ENCODE measurements at regions of chr3 and their contacts with region 1.

Region 1: GRCh38 chr3:49081429-49081828 is 12.4 kb downstream of the QRICH1 start:
- DNase-seq: no peak
- ATAC-seq: no peak
- H3K4me3 ChIP-seq: no peak overlapping the region
- H3K27ac ChIP-seq: no peak overlapping the region
- H3K4me1 ChIP-seq: no peaks in the 10 kb centered on the region
- CTCF ChIP-seq: no peak
- EP300 ChIP-seq: no peak
- POLR2A ChIP-seq: no peak
- RAD21 ChIP-seq: no peak

Region 2: DNA sequence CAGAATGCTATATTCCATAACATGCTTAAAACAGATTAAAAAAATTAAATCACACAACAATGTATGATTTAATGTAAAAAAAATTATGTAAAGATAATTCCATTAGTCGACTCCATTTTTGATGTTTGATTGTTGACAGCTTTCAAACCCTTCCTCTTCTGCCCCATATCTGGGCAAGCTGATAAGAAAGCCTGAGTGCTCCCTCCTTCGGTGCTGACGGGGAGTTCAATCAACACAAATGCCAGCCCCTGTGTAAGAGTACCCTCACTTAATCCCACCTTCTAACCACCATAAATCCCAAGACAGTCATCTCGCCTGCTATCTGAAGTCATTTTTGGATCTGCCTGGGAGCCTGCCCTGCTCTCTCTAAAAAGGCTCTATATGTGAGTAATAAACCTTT is 304.6 kb before region 1 on chr3:
- CTCF ChIA-PET with region 1: no interaction called
- POLR2A ChIA-PET with region 1: no interaction called
- DNase-seq: no peak
- ATAC-seq: no peak
- H3K4me3 ChIP-seq: no peak overlapping the region
- H3K27ac ChIP-seq: no peak overlapping the region
- H3K4me1 ChIP-seq: no peaks in the 10 kb centered on the region
- CTCF ChIP-seq: no peak
- EP300 ChIP-seq: no peak
- POLR2A ChIP-seq: no peak
- RAD21 ChIP-seq: no peak

Region 3: GRCh38 chr3:49021813-49022687 is 59.4 kb before region 1 on chr3 and contains the start of gene NDUFAF3:
- CTCF ChIA-PET with region 1: interaction called, 11 read pairs
- POLR2A ChIA-PET with region 1: no interaction called
- DNase-seq: peak; percentile 63 to 96
- ATAC-seq: peak; percentile 69 to 83
- H3K4me3 ChIP-seq: peak within 1 kb of the TSS; percentile 76
- H3K27ac ChIP-seq: peak within 1 kb of the TSS; percentile 98 to 100
- H3K4me1 ChIP-seq: peaks cover 26% of the 10 kb centered on the region
- CTCF ChIP-seq: peak; percentile 71
- EP300 ChIP-seq: no peak
- POLR2A ChIP-seq: peak; percentile 93
- RAD21 ChIP-seq: no peak
- polyA plus RNA-seq, gene NDUFAF3: 44.3 and 46.5 TPM in 2 replicates

Region 4: DNA sequence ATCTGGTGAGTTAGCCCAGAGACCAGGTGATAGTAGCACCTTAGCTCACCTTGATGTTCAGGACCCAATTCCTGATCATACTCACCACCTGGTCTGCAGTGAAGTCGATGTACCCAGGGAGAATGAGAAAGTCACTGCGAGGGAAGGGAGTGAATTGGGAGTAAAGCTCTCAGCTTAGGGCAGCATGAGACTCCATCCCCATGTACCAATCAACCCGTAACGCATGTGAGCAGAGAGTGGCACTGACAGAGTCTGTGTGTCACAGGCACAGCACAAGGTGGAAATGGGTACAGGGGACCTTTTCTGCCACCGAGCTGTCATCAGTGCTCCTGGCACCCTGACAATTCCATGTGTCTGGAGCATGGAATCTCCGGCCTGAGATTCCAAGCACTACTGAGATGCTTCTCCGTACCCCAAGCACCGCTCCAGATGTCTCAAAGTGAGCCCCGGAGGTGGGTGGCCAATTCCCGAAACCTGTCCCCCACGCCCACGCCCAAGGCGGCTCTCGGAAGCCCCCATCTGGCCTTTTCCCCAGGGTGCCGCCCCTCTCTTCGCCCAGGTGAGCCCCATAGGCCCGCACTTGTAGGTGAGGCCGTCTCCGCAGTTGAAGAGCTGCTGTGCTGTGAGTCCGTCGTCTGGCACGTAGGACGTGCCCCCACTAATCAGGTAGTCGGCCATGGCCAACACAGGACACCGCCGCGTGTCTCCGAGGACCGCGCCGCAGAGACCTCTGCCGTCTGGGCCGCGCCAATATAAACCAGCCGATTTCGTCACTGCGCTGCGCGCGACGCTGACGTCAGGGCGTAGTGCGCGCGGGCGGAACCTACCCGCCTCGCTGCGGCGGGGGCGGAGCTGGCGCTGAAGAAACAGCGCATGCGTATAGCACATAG is 52.5 kb before region 1 on chr3 and contains the start of gene IMPDH2:
- CTCF ChIA-PET with region 1: no interaction called
- POLR2A ChIA-PET with region 1: interaction called, 12 read pairs
- DNase-seq: peak; percentile 47 to 91
- ATAC-seq: peak; percentile 83 to 88
- H3K4me3 ChIP-seq: peak within 1 kb of the TSS; percentile 81
- H3K27ac ChIP-seq: peak within 1 kb of the TSS; percentile 90 to 91
- H3K4me1 ChIP-seq: peaks cover 14% of the 10 kb centered on the region
- CTCF ChIP-seq: no peak
- EP300 ChIP-seq: no peak
- POLR2A ChIP-seq: peak; percentile 100
- RAD21 ChIP-seq: no peak
- polyA plus RNA-seq, gene IMPDH2: 212 and 222 TPM in 2 replicates